Natural killer cell (primary cell): ENCODE measurements at regions of chr17 and their contacts with region 1.

Region 1: DNA sequence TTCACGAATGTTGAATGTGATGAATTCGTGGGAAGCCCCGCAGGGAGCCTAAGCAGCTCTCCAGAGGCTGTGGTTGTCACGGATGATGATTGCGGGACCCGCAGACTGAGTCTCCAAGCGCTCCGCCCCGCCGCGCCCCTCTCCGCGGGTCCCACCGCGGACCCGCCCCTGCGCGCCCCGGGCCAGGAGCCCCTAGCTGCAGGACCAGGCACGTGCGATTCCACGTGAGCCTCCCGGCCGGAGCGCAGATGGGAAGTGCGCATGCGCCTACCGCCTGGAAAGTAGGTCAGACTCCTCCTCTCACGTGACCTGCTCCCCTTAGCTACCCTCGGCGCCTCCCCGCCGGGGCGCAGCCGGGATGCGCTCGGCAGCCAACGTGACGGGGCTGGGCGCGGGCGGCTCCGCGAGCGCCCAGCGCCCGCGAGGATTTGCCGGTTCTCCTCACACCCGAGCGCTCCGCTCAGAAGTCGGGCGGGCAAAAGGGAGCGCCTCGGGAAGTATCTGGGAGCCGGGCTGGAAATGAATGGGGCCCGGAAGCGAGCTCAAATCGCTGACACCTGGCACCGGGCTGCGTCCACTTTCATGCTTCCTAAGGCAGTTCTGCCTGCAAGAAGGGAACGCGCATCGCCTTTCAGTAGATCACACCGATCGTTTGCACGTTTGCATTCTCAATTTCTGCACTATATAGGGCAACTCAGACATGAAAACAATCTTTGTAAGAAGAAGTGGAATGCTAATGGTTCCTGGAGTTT is 26.4 kb upstream of the HLF start:
- DNase-seq: peak; percentile 68 to 95
- ATAC-seq: peak; percentile 81 to 95 (median 88)
- H3K4me3 ChIP-seq: peak overlapping the region; percentile 47
- H3K4me3 Mint-ChIP-seq: peak overlapping the region; percentile 84
- H3K27ac ChIP-seq: peak overlapping the region; percentile 9
- H3K27ac Mint-ChIP-seq: peak overlapping the region; percentile 58 to 67
- H3K4me1 ChIP-seq: peaks cover 12% of the 10 kb centered on the region
- H3K4me1 Mint-ChIP-seq: peaks cover 18 to 24% of the 10 kb centered on the region in 2 donors
- H3K27me3 ChIP-seq: peaks cover 2% of the 10 kb centered on the region
- H3K27me3 Mint-ChIP-seq: peaks cover 2 to 14% of the 10 kb centered on the region in 2 donors
- CTCF ChIP-seq: no peak

Region 2: GRCh38 chr17:55216888-55217287 is 21.5 kb before region 1 on chr17:
- intact Hi-C with region 1: loop called (anchors 1 kb)
- DNase-seq: no peak
- ATAC-seq: no peak
- H3K4me3 ChIP-seq: no peak overlapping the region
- H3K4me3 Mint-ChIP-seq: no peak overlapping the region
- H3K27ac ChIP-seq: no peak overlapping the region
- H3K27ac Mint-ChIP-seq: no peak overlapping the region
- H3K4me1 ChIP-seq: no peaks in the 10 kb centered on the region
- H3K4me1 Mint-ChIP-seq: no peaks in the 10 kb centered on the region
- H3K27me3 ChIP-seq: no peaks in the 10 kb centered on the region
- H3K27me3 Mint-ChIP-seq: peaks cover 11 to 25% of the 10 kb centered on the region in 2 donors
- CTCF ChIP-seq: no peak

Region 3: DNA sequence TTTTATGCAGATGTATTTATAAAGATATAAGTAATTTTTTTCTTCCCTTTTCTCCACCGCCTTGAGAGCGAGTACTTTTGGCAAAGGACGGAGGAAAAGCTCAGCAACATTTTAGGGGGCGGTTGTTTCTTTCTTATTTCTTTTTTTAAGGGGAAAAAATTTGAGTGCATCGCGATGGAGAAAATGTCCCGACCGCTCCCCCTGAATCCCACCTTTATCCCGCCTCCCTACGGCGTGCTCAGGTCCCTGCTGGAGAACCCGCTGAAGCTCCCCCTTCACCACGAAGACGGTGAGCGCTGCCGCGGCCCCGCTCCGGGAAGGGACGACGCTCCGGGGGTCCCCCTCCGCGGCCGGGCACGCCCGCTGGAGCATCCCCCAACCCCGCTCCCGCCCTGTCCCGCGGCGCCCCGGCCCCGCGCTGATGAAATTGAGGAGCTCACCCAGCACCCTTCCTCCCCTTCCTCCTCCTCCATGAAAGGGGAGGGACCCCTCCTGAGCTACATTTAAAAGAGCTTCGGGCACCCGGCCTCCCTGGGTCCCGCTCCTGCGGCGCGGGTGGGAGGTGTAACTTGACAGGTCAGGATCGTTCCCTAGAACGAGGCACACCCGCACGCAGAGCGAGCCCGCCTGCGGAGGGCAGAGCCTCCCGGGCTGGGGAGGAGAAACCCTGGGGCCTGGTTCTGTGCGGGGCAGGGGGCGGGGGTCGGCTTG is 27.1 kb after region 1 on chr17:
- intact Hi-C with region 1: loop called (anchors 2 kb)
- DNase-seq: peak in 1 of 2 donors; percentile 40
- ATAC-seq: no peak
- H3K4me3 ChIP-seq: peak overlapping the region; percentile 23
- H3K4me3 Mint-ChIP-seq: peak overlapping the region; percentile 68
- H3K27ac ChIP-seq: no peak overlapping the region
- H3K27ac Mint-ChIP-seq: no peak overlapping the region
- H3K4me1 ChIP-seq: peaks cover 25% of the 10 kb centered on the region
- H3K4me1 Mint-ChIP-seq: peaks cover 15 to 24% of the 10 kb centered on the region in 2 donors
- H3K27me3 ChIP-seq: peaks cover 43% of the 10 kb centered on the region
- H3K27me3 Mint-ChIP-seq: peaks cover 45 to 77% of the 10 kb centered on the region in 2 donors
- CTCF ChIP-seq: no peak

Region 4: GRCh38 chr17:55872374-55872773 is 634.0 kb after region 1 on chr17:
- intact Hi-C with region 1: no loop called
- DNase-seq: no peak
- ATAC-seq: no peak
- H3K4me3 ChIP-seq: no peak overlapping the region
- H3K4me3 Mint-ChIP-seq: no peak overlapping the region
- H3K27ac ChIP-seq: no peak overlapping the region
- H3K27ac Mint-ChIP-seq: no peak overlapping the region
- H3K4me1 ChIP-seq: no peaks in the 10 kb centered on the region
- H3K4me1 Mint-ChIP-seq: no peaks in the 10 kb centered on the region
- H3K27me3 ChIP-seq: no peaks in the 10 kb centered on the region
- H3K27me3 Mint-ChIP-seq: no peaks in the 10 kb centered on the region
- CTCF ChIP-seq: no peak